ENCODE measurements at regions of chr2 and their contacts with region 1.

Region 1: DNA sequence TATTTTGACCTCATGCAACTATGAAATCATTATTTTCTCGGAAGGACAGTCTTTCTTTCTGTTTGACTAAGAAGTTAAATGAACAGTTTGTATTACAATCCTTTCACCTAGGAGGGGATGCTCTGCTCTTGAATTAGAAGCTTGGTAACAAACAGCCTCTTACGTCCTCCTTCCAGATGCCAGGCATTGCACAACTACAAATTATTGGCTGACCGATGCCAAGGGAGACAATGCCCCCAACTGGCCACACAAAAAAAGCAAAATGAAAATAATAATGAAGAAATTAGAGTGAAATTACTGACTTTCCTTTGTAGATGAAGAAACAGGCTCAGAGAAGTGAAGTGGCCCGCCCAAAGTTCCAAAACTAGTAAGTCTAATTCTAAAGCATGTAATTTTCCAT is 177.9 kb downstream of the CYRIA start:
- DNase-seq: peak; percentile 31 to 62 (median 40)
- ATAC-seq: peak; percentile 64
- H3K4me3 ChIP-seq: no peak overlapping the region
- H3K27ac ChIP-seq: no peak overlapping the region
- H3K4me1 ChIP-seq: no peaks in the 10 kb centered on the region
- H3K27me3 ChIP-seq: no peaks in the 10 kb centered on the region
- CTCF ChIP-seq: peak in 6 of 7 experiments; percentile 47 to 74 (median 68)
- POLR2A ChIP-seq: no peak

Region 2: GRCh38 chr2:15640261-15640711 is 847.4 kb before region 1 on chr2:
- intact Hi-C with region 1: loop called (anchors 10 kb)
- DNase-seq: no peak
- ATAC-seq: no peak
- H3K4me3 ChIP-seq: no peak overlapping the region
- H3K27ac ChIP-seq: no peak overlapping the region
- H3K4me1 ChIP-seq: no peaks in the 10 kb centered on the region
- H3K27me3 ChIP-seq: no peaks in the 10 kb centered on the region
- CTCF ChIP-seq: no peak
- POLR2A ChIP-seq: no peak

Region 3: DNA sequence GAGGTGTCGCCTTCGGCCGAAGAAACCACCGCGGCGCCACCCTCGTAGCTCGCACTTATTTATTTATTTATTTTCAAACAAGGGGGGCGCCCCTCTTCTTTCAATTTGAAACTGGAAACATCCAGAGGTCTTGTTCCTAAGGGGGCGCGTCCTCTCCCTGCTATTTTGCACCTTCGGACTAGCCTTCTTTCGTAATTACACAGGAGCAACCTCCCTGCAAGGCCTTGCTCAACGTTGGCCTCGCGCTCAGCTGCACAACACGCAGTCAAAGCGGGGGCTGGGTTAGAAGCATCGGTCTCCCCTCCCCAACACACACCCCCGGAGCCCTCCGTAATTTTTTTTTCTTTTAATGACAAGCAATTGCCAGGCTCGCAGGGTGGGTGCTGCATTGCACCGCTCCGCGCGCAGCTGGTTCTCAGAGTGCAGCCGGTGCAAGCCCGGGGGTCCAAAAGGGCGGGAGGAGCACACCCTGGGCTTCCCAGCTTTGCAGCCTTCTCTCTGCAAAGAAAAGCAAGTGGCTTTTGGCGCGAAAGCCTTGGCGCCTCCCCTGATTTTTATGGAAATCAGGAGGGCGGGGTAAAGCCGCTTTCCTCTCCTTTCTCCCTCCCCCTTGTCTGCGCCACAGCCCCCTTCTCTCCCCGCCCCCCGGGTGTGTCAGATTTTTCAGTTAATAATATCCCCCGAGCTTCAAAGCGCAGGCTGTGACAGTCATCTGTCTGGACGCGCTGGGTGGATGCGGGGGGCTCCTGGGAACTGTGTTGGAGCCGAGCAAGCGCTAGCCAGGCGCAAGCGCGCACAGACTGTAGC is 547.6 kb before region 1 on chr2 and contains the start of gene MYCN:
- intact Hi-C with region 1: loop called (anchors 10 kb)
- DNase-seq: peak in 2 of 4 donors; percentile 15 to 62
- ATAC-seq: peak; percentile 24
- H3K4me3 ChIP-seq: peak within 1 kb of the TSS in 1 of 2 donors; percentile 30
- H3K27ac ChIP-seq: no peak within 1 kb of the TSS
- H3K4me1 ChIP-seq: peaks cover 36% of the 10 kb centered on the region
- H3K27me3 ChIP-seq: peaks cover 0 to 23% of the 10 kb centered on the region in 2 donors
- CTCF ChIP-seq: peak in 5 of 7 experiments; percentile 52 to 80 (median 71)
- POLR2A ChIP-seq: no peak
- total RNA-seq, gene MYCN: not detected

Region 4: DNA sequence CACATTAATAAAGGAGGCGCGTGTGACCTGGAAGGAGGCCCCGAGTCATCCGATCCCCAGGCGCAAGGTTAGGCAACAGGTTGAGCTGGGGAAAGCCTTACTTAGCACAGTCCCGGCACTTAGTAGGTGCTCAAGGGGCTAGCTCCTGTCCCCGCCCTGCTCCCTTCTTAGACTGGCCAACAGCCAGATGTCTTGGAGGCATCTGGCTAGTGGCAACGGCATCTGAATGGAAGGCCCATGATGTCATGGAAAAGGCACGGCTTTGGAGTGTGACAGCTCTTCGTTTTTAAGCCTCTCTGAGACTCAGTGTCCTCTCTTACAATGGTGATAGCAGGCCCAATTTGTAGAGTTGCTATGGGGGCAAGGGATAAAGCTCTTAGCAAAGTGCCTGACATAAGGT is 80.3 kb before region 1 on chr2:
- intact Hi-C with region 1: no loop called
- DNase-seq: peak in 2 of 4 donors; percentile 23 to 42
- ATAC-seq: peak; percentile 59
- H3K4me3 ChIP-seq: no peak overlapping the region
- H3K27ac ChIP-seq: peak overlapping the region in 1 of 4 donors; percentile 36
- H3K4me1 ChIP-seq: peaks cover 15% of the 10 kb centered on the region
- H3K27me3 ChIP-seq: no peaks in the 10 kb centered on the region
- CTCF ChIP-seq: no peak
- POLR2A ChIP-seq: no peak

Measured in body of pancreas (tissue), 4 donors.